ENCODE measurements at regions of chr2 and their contacts with region 1.

Region 1: GRCh38 chr2:20781656-20782265 is 41.1 kb downstream of the LDAH start:
- DNase-seq: no peak
- ATAC-seq: peak; percentile 86
- H3K4me3 ChIP-seq: no peak overlapping the region
- H3K27ac ChIP-seq: no peak overlapping the region
- H3K4me1 ChIP-seq: no peaks in the 10 kb centered on the region
- H3K27me3 ChIP-seq: no peaks in the 10 kb centered on the region
- CTCF ChIP-seq: peak; percentile 59 to 82 (median 81)
- POLR2A ChIP-seq: no peak
- RAD21 ChIP-seq: peak; percentile 66

Region 2: GRCh38 chr2:20766798-20767644 is 14.7 kb before region 1 on chr2:
- CTCF ChIA-PET with region 1: interaction called, 14 read pairs
- POLR2A ChIA-PET with region 1: no interaction called
- RAD21 ChIA-PET with region 1: no interaction called
- intact Hi-C with region 1: no loop called
- DNase-seq: no peak
- ATAC-seq: no peak
- H3K4me3 ChIP-seq: no peak overlapping the region
- H3K27ac ChIP-seq: no peak overlapping the region
- H3K4me1 ChIP-seq: no peaks in the 10 kb centered on the region
- H3K27me3 ChIP-seq: no peaks in the 10 kb centered on the region
- CTCF ChIP-seq: no peak
- POLR2A ChIP-seq: no peak
- RAD21 ChIP-seq: no peak

Region 3: DNA sequence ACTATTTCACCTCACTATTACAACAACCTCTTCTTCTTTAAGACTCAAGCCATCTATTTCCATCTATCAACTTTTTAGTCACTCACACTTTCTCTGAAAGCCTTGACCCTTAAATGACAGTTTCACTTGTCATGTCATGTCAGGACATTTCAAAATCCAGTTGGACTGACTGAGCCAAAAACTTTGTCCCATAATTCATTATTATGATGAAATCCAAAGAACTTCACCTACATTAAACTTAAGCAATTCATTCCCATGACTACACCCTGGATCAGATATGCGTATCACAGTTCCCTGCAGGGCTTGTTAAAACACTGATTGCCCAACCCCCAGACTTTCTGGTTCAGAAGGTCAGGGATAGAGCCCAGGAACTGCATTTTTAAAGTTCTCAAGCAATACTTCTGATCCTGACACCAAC is 14.6 kb after region 1 on chr2:
- CTCF ChIA-PET with region 1: interaction called, 10 read pairs
- POLR2A ChIA-PET with region 1: no interaction called
- RAD21 ChIA-PET with region 1: no interaction called
- intact Hi-C with region 1: no loop called
- DNase-seq: no peak
- ATAC-seq: no peak
- H3K4me3 ChIP-seq: no peak overlapping the region
- H3K27ac ChIP-seq: no peak overlapping the region
- H3K4me1 ChIP-seq: no peaks in the 10 kb centered on the region
- H3K27me3 ChIP-seq: no peaks in the 10 kb centered on the region
- CTCF ChIP-seq: no peak
- POLR2A ChIP-seq: no peak
- RAD21 ChIP-seq: no peak

Region 4: GRCh38 chr2:20962939-20963557 is 181.3 kb after region 1 on chr2:
- CTCF ChIA-PET with region 1: interaction called, 38 read pairs
- POLR2A ChIA-PET with region 1: no interaction called
- RAD21 ChIA-PET with region 1: interaction called in 1 of 2 experiments, 4 read pairs
- intact Hi-C with region 1: loop called (anchors 1 kb)
- DNase-seq: peak; percentile 41
- ATAC-seq: peak; percentile 90
- H3K4me3 ChIP-seq: no peak overlapping the region
- H3K27ac ChIP-seq: no peak overlapping the region
- H3K4me1 ChIP-seq: no peaks in the 10 kb centered on the region
- H3K27me3 ChIP-seq: peaks cover 61% of the 10 kb centered on the region
- CTCF ChIP-seq: peak; percentile 70 to 91 (median 86); a peak in 5 of 6 replicates
- POLR2A ChIP-seq: no peak
- RAD21 ChIP-seq: peak; percentile 80

Region 5: DNA sequence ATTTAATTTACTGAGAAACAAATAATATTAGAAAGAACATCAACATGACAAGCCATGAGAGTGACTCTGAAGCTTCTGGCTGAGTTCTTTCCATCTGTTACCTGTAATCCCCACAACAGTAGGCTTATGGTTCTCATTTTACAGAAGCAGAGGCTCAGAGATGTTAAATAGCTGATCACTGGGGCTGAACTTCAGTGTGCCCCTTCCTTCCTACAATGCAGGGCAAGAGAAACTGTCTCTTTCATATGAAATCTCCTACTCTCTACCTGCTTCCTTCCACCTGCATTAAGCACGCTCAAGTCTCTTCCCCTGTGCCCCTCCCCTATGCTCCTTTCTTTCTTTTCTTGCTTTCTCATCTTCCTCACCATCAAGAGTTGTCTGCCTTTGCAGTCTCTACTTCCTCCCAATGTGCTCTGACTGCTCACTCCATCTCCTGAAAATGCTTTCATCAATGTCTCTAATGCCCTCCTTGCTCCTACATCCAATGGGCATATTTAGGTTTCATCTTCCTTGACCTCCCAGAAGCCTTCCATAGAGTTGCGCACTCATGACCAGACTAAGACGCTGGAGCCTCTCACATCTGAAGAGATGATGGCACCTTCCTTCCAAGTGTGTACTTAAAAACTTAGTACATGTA is 238.4 kb after region 1 on chr2:
- CTCF ChIA-PET with region 1: no interaction called
- POLR2A ChIA-PET with region 1: no interaction called
- RAD21 ChIA-PET with region 1: no interaction called
- intact Hi-C with region 1: loop called (anchors 5 kb)
- DNase-seq: no peak
- ATAC-seq: no peak
- H3K4me3 ChIP-seq: no peak overlapping the region
- H3K27ac ChIP-seq: no peak overlapping the region
- H3K4me1 ChIP-seq: no peaks in the 10 kb centered on the region
- H3K27me3 ChIP-seq: peaks cover 29% of the 10 kb centered on the region; the same call in 1 of the 2 replicates
- CTCF ChIP-seq: no peak
- POLR2A ChIP-seq: no peak
- RAD21 ChIP-seq: no peak

Region 6: GRCh38 chr2:21032338-21033236 is 250.8 kb after region 1 on chr2:
- CTCF ChIA-PET with region 1: no interaction called
- POLR2A ChIA-PET with region 1: no interaction called
- RAD21 ChIA-PET with region 1: no interaction called
- intact Hi-C with region 1: no loop called
- DNase-seq: no peak
- ATAC-seq: no peak
- H3K4me3 ChIP-seq: no peak overlapping the region
- H3K27ac ChIP-seq: no peak overlapping the region
- H3K4me1 ChIP-seq: no peaks in the 10 kb centered on the region
- H3K27me3 ChIP-seq: peaks cover 30% of the 10 kb centered on the region
- CTCF ChIP-seq: no peak
- POLR2A ChIP-seq: no peak
- RAD21 ChIP-seq: no peak